ENCODE measurements at regions of chr6 and their contacts with region 1.

Region 1: DNA sequence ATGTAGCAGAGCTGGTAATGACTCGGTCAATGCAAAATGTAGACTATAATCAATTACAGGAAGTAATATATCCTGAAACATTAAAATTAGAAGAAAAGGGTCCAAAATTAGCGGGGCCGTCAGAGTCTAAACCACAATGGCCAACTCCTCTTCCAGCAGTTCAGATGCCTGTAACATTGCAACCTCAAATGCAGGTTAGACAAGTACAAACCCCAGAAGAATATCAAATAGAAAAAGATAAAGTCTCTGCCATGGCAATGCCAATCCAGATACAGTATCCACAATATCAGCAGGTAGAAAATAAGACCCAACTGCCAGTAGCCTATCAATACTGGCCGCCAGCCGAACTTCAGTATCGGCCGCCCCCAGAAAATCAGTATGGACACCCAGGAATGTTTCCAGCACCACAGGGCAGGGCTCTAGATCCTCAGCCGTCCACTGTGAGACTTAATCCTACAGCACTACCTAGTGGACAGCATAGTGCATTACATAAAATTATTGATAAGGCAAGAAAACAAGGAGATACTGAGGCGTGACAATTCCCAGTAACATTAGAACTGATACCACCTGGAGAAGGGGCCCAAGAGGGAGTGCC is 158.4 kb downstream of the GPX5 start:
- DNase-seq: peak; percentile 70
- H3K4me3 Mint-ChIP-seq: no peak overlapping the region
- H3K27ac Mint-ChIP-seq: no peak overlapping the region
- H3K4me1 Mint-ChIP-seq: peaks cover 19% of the 10 kb centered on the region
- H3K27me3 Mint-ChIP-seq: no peaks in the 10 kb centered on the region
- CTCF ChIP-seq: peak; percentile 77

Region 2: GRCh38 chr6:28393911-28394662 is 290.0 kb before region 1 on chr6:
- CTCF ChIA-PET with region 1: interaction called, 4 read pairs
- POLR2A ChIA-PET with region 1: no interaction called
- intact Hi-C with region 1: loop called (anchors 1 kb)
- DNase-seq: peak; percentile 35
- H3K4me3 Mint-ChIP-seq: no peak overlapping the region
- H3K27ac Mint-ChIP-seq: no peak overlapping the region
- H3K4me1 Mint-ChIP-seq: peaks cover 31% of the 10 kb centered on the region
- H3K27me3 Mint-ChIP-seq: no peaks in the 10 kb centered on the region
- CTCF ChIP-seq: peak; percentile 33

Region 3: GRCh38 chr6:28542440-28543296 is 141.4 kb before region 1 on chr6:
- CTCF ChIA-PET with region 1: interaction called, 4 read pairs
- POLR2A ChIA-PET with region 1: no interaction called
- intact Hi-C with region 1: loop called (anchors 1 kb)
- DNase-seq: peak; percentile 90
- H3K4me3 Mint-ChIP-seq: peak overlapping the region; percentile 85
- H3K27ac Mint-ChIP-seq: peak overlapping the region; percentile 85
- H3K4me1 Mint-ChIP-seq: peaks cover 7% of the 10 kb centered on the region
- H3K27me3 Mint-ChIP-seq: peaks cover 18% of the 10 kb centered on the region
- CTCF ChIP-seq: peak; percentile 45

Region 4: DNA sequence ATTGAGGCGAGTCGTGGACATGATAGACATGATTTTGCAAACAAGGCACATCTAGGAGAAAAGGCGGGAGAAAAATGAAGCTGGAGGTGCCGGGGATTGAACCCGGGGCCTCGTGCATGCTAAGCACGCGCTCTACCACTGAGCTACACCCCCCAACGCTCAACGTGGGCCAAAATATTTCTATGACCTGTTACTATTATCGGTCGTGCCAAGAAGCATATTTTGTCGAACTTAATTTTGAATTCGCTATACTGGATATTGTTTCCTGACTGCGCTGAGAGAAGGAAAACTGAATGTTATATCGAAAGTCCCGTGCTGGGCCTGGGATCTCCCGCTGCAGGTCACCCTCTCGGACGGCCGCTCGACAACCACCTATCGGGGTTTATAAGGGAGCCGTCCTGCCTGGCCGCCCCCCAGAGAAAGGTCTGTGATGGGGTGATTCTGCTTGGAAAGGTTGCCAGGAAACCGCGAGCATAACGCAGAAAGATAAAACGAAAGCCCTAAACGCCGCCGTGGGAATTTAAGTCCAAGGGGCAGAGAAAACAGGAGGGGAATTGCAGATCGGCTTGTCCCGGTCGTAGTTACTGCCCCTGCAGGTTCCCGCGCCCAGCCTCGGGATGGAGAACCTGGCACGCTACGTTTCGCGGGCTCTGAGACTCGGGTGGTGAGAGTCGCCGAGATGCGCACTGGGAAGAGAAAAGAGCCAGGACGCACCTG is 179.7 kb after region 1 on chr6:
- CTCF ChIA-PET with region 1: interaction called, 4 read pairs
- POLR2A ChIA-PET with region 1: no interaction called
- intact Hi-C with region 1: loop called (anchors 1 kb)
- DNase-seq: peak; percentile 81
- H3K4me3 Mint-ChIP-seq: peak overlapping the region; percentile 93
- H3K27ac Mint-ChIP-seq: peak overlapping the region; percentile 53
- H3K4me1 Mint-ChIP-seq: peaks cover 14% of the 10 kb centered on the region
- H3K27me3 Mint-ChIP-seq: no peaks in the 10 kb centered on the region
- CTCF ChIP-seq: peak; percentile 7

Region 5: GRCh38 chr6:28960846-28961500 is 276.9 kb after region 1 on chr6:
- CTCF ChIA-PET with region 1: no interaction called
- POLR2A ChIA-PET with region 1: no interaction called
- intact Hi-C with region 1: no loop called
- DNase-seq: no peak
- H3K4me3 Mint-ChIP-seq: no peak overlapping the region
- H3K27ac Mint-ChIP-seq: peak overlapping the region; percentile 10
- H3K4me1 Mint-ChIP-seq: no peaks in the 10 kb centered on the region
- H3K27me3 Mint-ChIP-seq: no peaks in the 10 kb centered on the region
- CTCF ChIP-seq: no peak

Region 6: DNA sequence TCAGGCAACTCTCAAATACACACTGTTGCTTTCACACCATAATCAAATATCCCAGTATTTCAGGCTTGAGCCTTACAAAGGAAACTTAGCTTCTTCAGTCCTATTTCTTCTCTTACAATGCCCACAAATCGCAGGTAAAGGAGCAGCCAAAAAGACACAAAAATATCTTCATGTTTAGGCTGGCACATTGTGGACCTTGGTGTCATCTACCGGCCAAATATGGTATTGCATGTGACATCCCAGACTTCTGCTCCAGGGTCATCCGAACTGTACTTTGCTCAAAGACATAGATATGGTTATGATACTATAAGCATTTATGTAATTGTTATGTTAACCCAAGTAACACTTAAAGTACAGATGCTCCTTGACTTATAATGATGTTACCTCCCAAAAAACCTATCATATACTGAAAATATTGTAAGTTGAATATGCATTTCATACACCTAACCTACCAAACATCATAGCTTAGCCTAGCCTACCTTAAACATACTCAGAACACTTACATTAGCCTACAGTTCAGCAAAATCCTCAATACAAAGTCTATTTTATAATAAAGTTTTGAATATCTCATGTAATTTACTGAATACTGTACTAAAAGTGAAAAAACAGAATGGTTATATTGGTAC is 905.5 kb after region 1 on chr6:
- CTCF ChIA-PET with region 1: interaction called, 3 read pairs
- POLR2A ChIA-PET with region 1: no interaction called
- intact Hi-C with region 1: loop called (anchors 1 kb)
- DNase-seq: peak; percentile 65
- H3K4me3 Mint-ChIP-seq: no peak overlapping the region
- H3K27ac Mint-ChIP-seq: no peak overlapping the region
- H3K4me1 Mint-ChIP-seq: no peaks in the 10 kb centered on the region
- H3K27me3 Mint-ChIP-seq: peaks cover 68% of the 10 kb centered on the region
- CTCF ChIP-seq: peak; percentile 92